Posterior cingulate gyrus (tissue), 11 donors: ENCODE measurements at regions of chr21 and their contacts with region 1.

Region 1: DNA sequence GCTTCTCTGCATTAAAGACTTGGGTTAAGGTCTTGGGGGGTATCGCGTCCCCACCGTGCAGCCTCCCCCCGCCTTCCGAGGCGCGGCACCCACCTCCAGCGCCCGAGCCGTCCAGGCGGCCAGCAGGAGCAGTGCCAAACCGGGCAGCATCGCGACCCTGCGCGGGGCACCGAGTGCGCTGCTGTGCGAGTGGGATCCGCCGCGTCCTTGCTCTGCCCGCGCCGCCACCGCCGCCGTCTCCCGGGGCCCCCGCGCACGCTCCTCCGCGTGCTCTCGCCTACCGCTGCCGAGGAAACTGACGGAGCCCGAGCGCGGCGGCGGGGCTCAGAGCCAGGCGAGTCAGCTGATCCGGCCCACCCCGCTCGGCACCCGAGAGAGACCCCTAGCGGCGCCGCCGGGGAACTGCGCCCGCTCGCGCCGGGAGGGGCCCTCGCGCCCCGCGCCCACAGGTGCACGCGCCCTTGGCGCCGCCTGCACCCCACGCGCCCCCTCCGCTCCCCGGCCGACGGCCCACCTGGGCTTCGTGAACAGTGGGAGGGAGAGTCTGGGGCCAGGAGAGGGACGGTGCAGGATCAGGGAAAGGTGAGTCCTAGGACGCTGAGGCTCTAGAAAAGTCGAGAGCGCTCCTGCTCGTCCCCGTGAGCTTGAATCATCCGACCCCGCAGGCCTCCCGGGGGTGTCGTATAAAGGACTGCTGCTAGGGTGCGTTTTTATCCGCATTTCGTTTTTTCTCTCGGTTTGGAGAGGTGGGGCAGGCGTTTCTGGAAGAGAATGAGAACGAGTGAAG is at the start of gene APP:
- DNase-seq: peak; percentile 76 to 98 (median 85)

Region 2: DNA sequence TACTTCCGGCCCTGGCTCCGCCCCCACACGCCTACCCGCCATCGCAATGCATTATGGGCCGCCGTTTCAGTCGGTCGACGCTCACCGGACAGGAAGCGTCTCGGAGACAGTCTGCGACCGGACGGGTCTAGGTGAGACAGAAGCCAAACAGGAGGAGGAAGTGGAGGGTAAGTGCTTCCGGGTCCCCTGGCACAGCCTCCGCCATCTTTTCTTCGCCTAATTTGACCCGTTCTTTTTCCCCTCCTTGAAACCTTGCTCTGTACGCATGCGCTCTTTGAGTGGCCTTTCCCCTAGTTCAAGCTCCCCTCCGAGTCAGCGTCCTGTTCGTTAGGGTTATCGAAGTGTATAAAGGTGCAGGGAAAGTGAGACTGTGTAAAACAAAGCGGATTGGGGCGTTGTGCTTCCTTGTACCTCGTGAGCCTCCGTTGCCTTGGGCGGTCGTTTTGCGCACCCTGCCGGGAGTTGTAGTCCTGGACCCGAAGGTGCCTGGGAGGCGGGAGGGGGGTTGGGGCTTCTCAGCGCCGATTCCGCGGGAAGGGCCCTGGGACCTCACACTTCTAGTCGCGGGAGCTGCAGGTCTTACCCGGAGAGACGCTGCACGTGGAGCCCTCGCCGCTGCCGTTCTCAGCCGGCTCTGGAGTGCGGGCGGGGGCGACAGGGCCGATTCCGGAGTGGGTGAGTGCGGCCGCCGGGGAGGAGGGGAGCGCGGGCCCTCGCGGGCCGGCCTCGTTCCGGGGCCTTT is 435.6 kb before region 1 on chr21 and contains the starts of genes ATP5PF and GABPA:
- intact Hi-C with region 1: loop called (anchors 10 kb)
- DNase-seq: peak; percentile 94 to 99 (median 96)

Region 3: DNA sequence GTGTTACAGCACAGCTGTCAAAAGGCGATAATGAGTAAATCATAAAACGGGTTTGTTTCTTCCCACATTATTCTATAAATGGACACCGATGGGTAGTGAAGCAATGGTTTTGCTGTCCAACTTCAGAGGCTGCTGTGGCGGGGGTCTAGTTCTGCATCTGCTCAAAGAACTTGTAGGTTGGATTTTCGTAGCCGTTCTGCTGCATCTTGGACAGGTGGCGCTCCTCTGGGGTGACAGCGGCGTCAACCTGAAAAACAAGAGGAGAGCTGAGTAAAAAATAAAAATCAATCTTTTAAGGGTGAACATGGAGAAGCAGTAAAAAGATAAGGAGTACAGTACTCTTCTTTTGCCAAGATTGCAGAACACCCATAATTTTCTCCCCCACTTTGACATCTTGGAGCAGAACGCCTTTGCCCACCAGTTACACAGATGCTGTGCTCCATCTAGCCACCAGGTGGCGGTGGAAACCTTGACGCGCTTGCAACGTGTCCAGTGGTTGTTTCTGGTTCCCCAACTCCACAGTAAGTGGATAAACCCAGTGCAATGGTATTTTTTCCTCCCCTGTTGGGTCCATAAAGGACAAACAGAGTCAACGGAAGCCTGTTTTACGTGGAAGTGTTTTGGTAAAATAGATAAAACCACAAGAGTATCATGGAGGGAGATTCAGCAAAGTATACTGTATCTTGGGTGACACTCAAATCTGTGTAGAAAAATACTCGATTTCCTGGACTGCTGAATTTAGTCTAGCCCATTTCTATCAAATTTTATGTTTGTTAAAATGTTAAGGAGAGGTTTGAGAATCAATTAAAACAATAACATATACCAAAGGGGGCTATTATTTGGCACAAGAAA is 288.9 kb before region 1 on chr21:
- intact Hi-C with region 1: loop called (anchors 5 kb)
- DNase-seq: peak in 9 of 10 donors; percentile 62 to 96 (median 75)

Region 4: GRCh38 chr21:25895565-25896205 is 275.0 kb before region 1 on chr21:
- intact Hi-C with region 1: loop called (anchors 5 kb)
- DNase-seq: no peak

Region 5: DNA sequence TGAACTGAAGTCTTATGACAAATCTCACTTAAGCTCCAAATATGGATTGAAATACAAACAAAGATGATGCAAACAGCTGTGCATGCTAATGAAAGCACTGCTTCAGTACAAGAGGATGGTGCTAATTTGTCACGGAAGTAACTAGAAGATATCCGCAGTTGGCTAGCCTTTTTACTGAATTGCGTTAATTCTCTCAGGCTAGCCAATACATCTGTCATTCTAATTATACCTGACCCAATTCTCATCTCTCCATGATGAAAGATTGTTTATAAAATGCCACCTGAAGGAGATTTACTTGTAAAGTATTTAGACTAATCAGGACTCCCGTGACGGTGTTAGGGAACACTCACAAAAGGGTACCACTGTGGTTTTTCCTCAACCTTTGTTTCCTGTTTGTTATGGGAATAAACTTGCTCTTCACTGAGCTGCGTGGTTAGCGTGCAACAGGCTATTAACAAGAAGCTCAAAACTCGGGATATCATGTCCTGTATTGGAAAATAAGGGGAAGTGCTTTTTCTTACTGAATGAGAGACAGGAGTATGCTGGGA is 162.6 kb before region 1 on chr21:
- intact Hi-C with region 1: loop called (anchors 5 kb)
- DNase-seq: no peak

Region 6: DNA sequence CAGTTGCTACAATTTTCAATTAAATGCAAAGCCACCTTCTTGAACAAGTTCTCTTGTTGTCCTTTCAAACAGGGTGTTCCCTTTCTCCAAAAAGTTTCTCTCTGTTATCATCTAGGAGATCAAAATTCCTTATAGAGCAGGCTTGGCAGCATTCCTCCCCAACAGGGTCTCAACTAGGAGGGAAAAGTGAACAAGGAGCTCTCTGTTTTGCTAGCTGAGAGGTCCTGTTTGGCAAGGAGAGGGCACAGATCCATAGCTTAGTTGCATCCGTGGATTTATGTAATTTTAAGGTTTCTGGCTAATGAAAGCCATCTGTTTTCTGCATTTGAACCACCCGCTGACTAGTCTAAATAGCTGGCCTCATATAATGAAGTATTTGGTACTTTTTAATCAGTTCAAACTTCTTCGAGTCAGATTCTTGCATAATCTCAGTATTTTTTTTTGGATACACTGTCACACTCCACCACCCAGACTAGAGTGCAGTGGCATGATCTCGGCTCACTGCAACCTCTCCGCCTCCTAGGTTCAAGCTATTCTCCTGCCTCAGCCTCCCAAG is 54.1 kb before region 1 on chr21:
- intact Hi-C with region 1: loop called (anchors 5 kb)
- DNase-seq: no peak

Region 7: GRCh38 chr21:26331205-26331980 is 160.7 kb after region 1 on chr21:
- intact Hi-C with region 1: no loop called
- DNase-seq: no peak

Region 8: DNA sequence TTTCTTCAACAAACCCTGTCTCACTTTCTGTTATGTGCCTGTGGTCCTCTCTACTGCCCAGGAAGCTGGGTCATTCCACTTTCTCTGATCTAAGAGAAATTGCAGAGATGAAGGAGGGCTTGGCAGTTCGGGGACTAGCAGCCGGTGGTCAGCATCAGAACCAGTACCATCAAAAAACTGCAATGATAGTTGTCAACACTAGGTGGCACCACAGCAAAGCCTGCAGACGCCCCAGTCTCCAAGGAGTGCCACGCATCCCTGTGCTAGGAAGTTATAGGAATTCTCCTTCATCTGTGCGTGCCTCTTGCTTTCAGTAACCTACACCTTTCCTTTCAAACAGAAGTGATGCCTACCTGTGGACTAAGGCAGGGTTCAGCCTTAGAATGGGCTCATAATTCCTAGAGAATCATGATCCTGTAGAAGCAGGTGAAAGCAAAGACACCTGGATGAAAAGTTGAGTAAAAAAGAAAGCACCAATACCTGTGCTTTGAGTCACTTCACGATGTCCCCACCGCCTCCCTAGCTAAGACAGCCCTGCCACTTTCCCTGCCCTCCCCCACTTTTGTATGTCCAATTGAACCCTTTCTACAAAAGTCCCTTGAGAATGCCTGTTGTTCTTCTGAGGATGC is 545.3 kb after region 1 on chr21:
- intact Hi-C with region 1: loop called (anchors 2 kb)
- DNase-seq: peak in 7 of 10 donors; percentile 39 to 93 (median 60)

Region 9: GRCh38 chr21:26795866-26796329 is 625.2 kb after region 1 on chr21:
- intact Hi-C with region 1: no loop called
- DNase-seq: peak; percentile 27 to 91 (median 54)